Activated naive CD8-positive, alpha-beta T cell treated with anti-CD3 and anti-CD28 coated beads, Interleukin-2, amount 10 ng/mL, durations not matched to agents 7 days and 5 days (primary cell): ENCODE measurements at regions of chr1 and their contacts with region 1.

Region 1: DNA sequence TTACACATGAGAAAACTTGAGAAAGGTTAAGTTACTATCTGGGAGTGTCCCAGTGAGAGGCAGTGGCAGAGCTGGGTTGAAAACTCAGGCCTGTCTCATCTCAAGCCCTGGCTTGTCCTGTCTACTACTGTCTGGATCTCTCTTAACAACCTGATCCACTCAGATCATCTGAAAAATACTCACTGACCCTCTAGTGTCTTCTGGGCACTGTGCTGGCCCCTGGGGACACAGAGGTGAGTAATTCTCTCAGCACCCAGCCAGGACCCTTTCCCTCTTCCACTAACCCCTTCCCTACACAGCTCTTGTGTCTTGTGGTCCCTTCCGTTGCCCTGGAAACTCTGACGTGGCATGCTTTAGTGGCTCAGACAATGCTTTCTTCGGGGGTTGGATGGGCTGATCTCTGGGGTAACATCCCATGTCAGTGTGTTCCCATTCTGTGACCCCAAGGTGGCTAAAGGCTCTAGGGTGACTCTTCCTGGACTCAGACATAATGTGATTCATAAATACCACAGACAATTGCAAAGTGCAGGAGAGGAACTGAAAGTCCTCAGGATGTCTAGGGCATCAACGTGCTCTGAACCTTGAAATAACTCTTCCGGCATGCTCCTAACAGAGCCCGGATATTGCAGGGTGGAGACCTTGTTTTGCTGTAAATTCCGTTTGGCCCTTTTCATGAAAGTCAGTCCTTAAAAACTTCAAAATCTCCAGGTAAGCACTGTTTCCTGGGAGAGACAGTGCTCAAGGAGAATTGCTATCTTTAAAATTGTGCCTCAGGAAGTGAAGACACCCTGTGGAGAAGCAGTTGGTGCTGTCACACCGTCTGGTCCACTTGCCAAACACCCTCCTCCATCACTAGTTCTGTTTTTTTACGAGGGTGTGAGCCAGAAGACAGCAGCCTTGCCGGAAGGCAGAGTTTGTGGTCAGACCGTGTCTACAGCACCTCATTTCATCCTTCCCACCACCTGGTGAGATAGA is 4.0 kb downstream of the SHISAL2A start:
- DNase-seq: peak; percentile 71
- ATAC-seq: peak; percentile 65
- H3K4me3 Mint-ChIP-seq: peak overlapping the region; percentile 82
- H3K27ac Mint-ChIP-seq: peak overlapping the region; percentile 100
- H3K4me1 Mint-ChIP-seq: peaks cover 55% of the 10 kb centered on the region
- H3K27me3 Mint-ChIP-seq: no peaks in the 10 kb centered on the region

Region 2: DNA sequence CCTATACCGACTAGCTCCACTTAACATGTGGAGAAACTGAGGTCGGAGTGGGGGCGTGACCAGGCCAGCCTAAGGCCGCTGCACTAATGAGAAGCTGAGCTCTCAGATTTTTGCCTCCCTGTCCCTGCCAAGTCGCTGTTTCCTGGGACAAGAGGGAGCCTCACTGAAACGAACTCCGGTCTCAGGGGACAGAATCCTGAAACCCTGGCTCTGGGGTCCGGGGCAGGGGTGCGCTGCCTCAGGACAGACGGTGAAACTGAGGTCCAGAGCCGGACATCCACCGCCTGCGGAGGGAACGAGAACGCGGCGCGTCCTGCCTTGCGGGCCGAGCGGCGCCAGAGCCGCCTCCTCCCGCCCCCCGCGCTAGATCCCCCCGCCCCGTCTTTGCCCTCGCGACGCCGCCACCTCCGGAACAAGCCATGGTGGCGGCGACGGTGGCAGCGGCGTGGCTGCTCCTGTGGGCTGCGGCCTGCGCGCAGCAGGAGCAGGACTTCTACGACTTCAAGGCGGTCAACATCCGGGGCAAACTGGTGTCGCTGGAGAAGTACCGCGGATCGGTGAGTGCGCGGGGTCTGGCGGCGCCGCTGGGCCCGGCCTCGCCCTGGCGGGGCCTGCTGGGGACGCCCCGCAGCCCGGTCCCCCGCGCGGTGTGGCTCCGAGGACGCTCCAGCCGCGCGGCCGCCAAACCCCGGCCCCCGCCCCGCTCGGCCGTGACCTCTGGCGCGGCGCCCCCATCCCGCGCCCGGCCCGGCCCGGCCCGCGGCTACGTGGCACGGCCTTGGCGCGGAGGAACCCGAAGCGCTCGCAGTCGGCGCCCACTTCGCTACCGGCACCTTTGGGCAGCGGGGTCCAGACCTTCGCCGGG is 34.8 kb before region 1 on chr1 and contains the start of gene GPX7:
- POLR2A ChIA-PET with region 1: interaction called, 21 read pairs
- DNase-seq: peak; percentile 76
- ATAC-seq: peak; percentile 64
- H3K4me3 Mint-ChIP-seq: peak within 1 kb of the TSS; percentile 87
- H3K27ac Mint-ChIP-seq: peak within 1 kb of the TSS; percentile 86
- H3K4me1 Mint-ChIP-seq: peaks cover 27% of the 10 kb centered on the region
- H3K27me3 Mint-ChIP-seq: no peaks in the 10 kb centered on the region
- total RNA-seq, gene GPX7: 13.5 to 13.9 TPM

Region 3: DNA sequence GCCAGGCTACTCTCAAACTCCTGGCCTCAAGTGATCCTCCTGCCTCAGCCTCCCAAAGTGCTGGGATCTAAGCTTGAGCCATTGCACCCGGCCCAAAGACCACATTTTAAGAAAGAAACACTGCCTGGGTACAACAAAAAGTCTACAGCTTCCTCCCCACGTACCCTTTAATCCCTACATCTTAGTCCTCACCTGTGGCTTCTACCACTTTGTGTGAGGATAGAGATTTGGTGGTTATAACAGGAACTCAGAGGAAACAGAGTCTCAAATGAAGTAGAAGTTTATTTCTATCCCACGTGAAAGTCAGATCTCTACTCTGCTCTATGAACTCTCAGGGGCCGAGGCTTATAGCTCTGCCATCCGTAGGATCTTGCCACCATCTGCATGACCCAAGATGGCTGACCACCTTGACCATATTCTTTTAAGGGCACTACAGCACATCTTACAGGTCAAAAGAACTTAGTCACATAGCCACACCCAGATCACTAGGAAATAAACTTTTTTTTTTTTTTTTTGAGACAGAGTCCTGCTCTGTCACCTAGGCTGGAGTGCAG is 21.4 kb before region 1 on chr1:
- POLR2A ChIA-PET with region 1: interaction called, 10 read pairs
- DNase-seq: no peak
- ATAC-seq: peak; percentile 72
- H3K4me3 Mint-ChIP-seq: peak overlapping the region; percentile 70
- H3K27ac Mint-ChIP-seq: peak overlapping the region; percentile 84
- H3K4me1 Mint-ChIP-seq: peaks cover 13% of the 10 kb centered on the region
- H3K27me3 Mint-ChIP-seq: no peaks in the 10 kb centered on the region

Region 4: GRCh38 chr1:52726265-52727113 is 89.5 kb after region 1 on chr1 and contains the start of gene ZYG11B:
- POLR2A ChIA-PET with region 1: no interaction called
- DNase-seq: peak; percentile 97
- ATAC-seq: peak; percentile 88
- H3K4me3 Mint-ChIP-seq: peak within 1 kb of the TSS; percentile 93
- H3K27ac Mint-ChIP-seq: peak within 1 kb of the TSS; percentile 91
- H3K4me1 Mint-ChIP-seq: peaks cover 24% of the 10 kb centered on the region
- H3K27me3 Mint-ChIP-seq: peaks cover 5% of the 10 kb centered on the region
- total RNA-seq, gene ZYG11B: 13.7 to 13.8 TPM